ENCODE measurements at regions of chr18 and their contacts with region 1.

Region 1: GRCh38 chr18:3281456-3282400 is 19.8 kb downstream of the MYL12B start:
- DNase-seq: peak; percentile 56
- CTCF ChIP-seq: peak; percentile 44

Region 2: GRCh38 chr18:3451183-3451988 is 169.7 kb after region 1 on chr18:
- in situ Hi-C with region 1: loop called (anchors 10 kb)
- DNase-seq: peak; percentile 54
- CTCF ChIP-seq: no peak

Region 3: DNA sequence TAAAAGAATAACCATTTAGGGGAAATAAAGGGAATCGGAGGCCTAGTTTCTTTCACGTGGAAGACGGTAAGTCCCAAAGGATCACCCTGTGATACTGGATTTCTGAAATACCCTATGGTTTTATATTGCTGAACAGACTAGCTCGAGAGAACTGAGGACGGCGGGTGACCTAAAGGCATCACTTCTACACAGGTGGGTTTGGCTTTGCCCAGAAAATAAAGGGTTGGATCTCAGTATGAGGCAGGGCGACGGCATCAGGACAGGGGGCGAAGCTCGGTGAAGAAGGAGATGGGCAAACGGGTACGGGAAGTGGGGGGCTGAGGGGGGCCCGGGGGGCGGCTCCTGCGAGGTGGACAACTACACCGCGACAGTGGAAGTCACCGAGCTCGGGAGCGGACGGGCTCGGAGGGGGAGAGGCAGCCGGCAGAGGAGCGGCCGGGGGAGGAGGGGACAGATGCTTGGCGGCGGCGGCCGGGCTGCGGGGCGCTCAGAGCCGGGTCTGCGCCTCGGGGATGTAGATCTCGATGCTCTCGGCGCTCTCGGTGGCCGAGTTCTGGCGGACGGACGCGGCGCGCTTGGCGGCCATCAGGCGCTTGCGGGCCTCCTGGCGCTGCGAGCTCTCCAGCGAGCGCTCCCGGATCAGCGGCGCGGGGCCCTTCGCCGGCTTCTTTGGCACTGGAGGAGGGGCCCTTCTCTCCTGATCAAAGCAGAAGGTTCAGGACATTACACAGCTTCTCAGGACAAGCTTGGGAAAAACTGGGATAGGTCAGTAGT is 217.2 kb after region 1 on chr18:
- in situ Hi-C with region 1: no loop called
- DNase-seq: peak; percentile 39
- CTCF ChIP-seq: no peak

Region 4: DNA sequence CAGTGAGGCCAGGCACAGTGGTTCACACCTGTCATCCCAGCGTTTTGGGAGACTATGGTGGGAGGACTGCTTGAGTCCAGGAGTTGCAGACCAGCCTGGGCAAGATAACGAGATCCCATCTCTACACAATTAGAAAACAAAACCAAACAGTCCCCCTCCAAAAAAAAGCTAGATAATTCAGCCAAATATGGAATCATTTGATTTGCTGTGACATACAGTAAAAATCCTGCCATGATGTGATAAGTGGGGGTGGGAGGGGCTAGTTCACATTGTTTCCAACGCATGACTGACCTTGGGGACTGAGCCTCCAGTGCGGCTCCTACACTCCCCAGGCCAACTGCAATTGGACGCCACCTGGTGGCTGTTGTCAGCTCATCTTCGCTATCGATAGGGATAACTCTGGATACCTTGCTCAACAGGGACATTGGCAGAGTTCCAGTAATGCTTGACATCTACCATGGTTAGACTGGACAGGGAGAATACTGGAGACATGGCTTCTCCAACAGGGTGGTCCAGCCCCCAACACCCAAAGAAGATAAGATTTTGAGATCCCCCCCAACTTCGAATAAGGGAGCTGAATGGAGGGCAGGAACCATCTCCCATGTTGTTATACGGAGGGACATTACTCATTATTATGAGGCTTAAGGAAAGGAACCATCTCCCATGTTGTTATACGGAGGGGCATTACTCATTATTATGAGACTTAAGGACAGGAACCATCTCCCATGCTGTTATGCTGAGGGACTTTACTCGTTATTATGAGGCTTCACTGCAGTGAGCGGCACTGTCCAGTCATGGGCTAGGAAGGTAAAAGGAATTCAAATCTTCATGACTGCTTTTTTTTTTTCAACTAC is 304.2 kb after region 1 on chr18:
- in situ Hi-C with region 1: loop called (anchors 5 kb)
- DNase-seq: peak; percentile 52
- CTCF ChIP-seq: peak; percentile 76

Region 5: DNA sequence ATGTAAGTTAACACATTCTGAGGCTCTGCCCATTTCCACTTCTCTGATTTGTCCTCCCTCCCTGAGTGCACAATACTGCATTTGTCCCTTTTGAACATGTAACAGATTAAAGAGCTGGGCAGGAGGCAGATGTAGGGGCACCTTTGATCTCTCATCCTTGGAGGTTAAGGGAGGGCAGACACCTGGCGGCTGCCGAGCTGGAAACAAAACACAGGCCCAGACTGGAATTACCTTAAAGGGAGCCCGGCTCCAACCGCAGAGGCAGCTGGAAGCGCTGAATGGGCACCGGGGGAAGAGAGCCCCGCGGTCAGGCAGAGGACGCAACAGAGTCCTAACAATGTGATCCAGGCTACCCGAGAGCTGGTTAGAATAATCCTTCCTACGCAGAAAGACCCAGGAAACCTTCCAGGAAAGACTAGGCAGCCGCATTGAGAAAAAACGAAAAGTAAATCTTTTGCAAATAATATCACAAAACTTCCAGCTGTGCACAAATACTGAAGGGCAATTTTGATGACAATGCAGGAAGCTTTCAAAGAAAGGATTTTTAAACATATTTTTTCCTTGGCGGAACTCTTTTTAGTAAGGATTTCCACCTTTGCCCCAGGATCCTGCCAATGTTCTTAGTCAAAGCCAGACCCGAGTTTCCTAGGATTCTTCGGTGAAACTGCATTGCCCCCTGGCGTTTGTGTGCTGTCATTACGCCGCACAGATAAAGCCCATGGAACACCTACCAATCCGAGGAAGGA is 384.2 kb after region 1 on chr18:
- in situ Hi-C with region 1: loop called (anchors 5 kb)
- DNase-seq: peak; percentile 72
- CTCF ChIP-seq: peak; percentile 84

Measured in GM13977 (cell line).